GM12878 (cell line): ENCODE measurements at regions of chr12 and their contacts with region 1.

Region 1: GRCh38 chr12:76037130-76038103 is 5.8 kb upstream of the PHLDA1 start:
- DNase-seq: peak; percentile 34
- ATAC-seq: peak; percentile 68
- H3K4me3 ChIP-seq: no peak overlapping the region
- H3K27ac ChIP-seq: no peak overlapping the region
- H3K4me1 ChIP-seq: peaks cover 5% of the 10 kb centered on the region
- H3K27me3 ChIP-seq: no peaks in the 10 kb centered on the region
- CTCF ChIP-seq: peak; percentile 74 to 84 (median 81)
- EP300 ChIP-seq: no peak
- POLR2A ChIP-seq: no peak
- RAD21 ChIP-seq: peak; percentile 96

Region 2: DNA sequence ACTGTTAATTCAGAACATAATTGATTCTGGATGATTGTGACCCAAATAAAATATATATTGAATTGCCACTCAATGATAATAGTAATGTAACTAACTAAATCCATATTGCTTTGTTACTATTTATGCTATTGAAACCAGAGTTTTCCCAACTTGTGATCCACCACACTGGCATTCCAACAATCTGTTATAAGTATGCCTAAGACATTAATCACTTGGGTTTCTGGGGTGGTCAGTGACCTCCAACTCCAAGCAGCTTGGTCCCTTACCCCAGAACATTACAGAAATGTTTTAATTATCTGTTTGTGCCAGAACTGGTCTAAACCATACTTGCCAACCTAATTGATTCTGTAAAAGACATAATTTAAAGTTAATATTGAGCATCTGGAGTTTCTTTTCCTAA is 721.9 kb before region 1 on chr12:
- CTCF ChIA-PET with region 1: no interaction called
- POLR2A ChIA-PET with region 1: no interaction called
- RAD21 ChIA-PET with region 1: no interaction called
- SMC1A ChIA-PET with region 1: no interaction called
- in situ Hi-C with region 1: no loop called
- intact Hi-C with region 1: no loop called
- DNase-seq: no peak
- ATAC-seq: no peak
- H3K4me3 ChIP-seq: no peak overlapping the region
- H3K27ac ChIP-seq: no peak overlapping the region
- H3K4me1 ChIP-seq: no peaks in the 10 kb centered on the region
- H3K27me3 ChIP-seq: no peaks in the 10 kb centered on the region
- CTCF ChIP-seq: no peak
- EP300 ChIP-seq: no peak
- POLR2A ChIP-seq: no peak
- RAD21 ChIP-seq: no peak

Region 3: DNA sequence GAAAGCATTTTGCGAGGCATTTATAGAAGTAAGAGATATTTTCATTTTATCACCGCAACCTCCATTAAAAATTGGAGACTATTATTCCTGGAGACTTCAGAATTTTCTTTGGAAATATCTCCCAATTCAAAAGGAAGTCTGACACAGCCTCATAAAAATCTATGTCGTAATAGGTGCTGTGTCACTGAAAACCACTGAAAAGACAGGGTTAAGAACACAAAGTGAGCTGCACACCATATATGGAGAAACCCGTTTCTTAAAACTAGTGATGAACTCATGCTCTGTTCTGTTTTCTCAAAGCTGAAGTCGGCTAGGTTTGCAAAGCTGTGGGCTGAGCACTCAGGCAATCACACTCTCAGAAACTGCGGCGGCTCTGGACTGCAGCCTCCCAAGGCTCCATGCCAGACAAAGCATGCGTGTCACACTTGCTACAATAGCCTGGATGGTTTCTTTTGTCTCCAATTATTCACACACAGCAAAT is 556.9 kb before region 1 on chr12 and contains the start of gene GLIPR1:
- CTCF ChIA-PET with region 1: interaction called, 43 read pairs
- POLR2A ChIA-PET with region 1: interaction called, 9 read pairs
- RAD21 ChIA-PET with region 1: interaction called, 63 read pairs
- SMC1A ChIA-PET with region 1: interaction called, 50 read pairs
- in situ Hi-C with region 1: no loop called
- intact Hi-C with region 1: no loop called
- DNase-seq: peak; percentile 72
- ATAC-seq: peak; percentile 85
- H3K4me3 ChIP-seq: peak within 1 kb of the TSS; percentile 83
- H3K27ac ChIP-seq: peak within 1 kb of the TSS; percentile 88
- H3K4me1 ChIP-seq: peaks cover 28% of the 10 kb centered on the region
- H3K27me3 ChIP-seq: no peaks in the 10 kb centered on the region
- CTCF ChIP-seq: no peak
- EP300 ChIP-seq: no peak; a peak in 1 of 4 replicates
- POLR2A ChIP-seq: peak; percentile 91
- RAD21 ChIP-seq: no peak
- polyA plus RNA-seq, gene GLIPR1: 39.8 to 62.6 TPM

Region 4: DNA sequence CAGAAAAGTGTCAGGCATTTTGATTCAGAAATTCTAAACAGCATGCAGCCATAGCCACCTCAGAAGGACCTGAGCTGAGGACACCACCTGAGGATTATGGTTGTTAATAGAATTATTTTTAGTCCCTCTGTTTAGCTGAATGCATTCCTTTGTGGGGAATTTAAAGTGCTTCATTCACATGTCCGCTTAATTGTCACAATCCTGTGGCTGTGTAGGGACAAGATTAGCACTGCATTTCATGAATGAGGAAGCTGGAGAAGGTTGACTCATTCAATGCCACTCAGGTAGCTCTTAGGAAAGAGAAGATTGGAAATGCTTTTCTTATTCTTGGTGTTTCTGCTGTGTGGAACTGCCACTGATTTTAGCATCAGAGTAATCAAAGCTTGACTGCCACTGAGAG is 484.0 kb before region 1 on chr12:
- CTCF ChIA-PET with region 1: interaction called, 34 read pairs
- POLR2A ChIA-PET with region 1: no interaction called
- RAD21 ChIA-PET with region 1: interaction called, 89 read pairs
- SMC1A ChIA-PET with region 1: interaction called, 23 read pairs
- in situ Hi-C with region 1: no loop called
- intact Hi-C with region 1: no loop called
- DNase-seq: no peak
- ATAC-seq: peak; percentile 44
- H3K4me3 ChIP-seq: no peak overlapping the region
- H3K27ac ChIP-seq: no peak overlapping the region
- H3K4me1 ChIP-seq: no peaks in the 10 kb centered on the region
- H3K27me3 ChIP-seq: no peaks in the 10 kb centered on the region
- CTCF ChIP-seq: no peak
- EP300 ChIP-seq: no peak
- POLR2A ChIP-seq: no peak
- RAD21 ChIP-seq: no peak

Region 5: DNA sequence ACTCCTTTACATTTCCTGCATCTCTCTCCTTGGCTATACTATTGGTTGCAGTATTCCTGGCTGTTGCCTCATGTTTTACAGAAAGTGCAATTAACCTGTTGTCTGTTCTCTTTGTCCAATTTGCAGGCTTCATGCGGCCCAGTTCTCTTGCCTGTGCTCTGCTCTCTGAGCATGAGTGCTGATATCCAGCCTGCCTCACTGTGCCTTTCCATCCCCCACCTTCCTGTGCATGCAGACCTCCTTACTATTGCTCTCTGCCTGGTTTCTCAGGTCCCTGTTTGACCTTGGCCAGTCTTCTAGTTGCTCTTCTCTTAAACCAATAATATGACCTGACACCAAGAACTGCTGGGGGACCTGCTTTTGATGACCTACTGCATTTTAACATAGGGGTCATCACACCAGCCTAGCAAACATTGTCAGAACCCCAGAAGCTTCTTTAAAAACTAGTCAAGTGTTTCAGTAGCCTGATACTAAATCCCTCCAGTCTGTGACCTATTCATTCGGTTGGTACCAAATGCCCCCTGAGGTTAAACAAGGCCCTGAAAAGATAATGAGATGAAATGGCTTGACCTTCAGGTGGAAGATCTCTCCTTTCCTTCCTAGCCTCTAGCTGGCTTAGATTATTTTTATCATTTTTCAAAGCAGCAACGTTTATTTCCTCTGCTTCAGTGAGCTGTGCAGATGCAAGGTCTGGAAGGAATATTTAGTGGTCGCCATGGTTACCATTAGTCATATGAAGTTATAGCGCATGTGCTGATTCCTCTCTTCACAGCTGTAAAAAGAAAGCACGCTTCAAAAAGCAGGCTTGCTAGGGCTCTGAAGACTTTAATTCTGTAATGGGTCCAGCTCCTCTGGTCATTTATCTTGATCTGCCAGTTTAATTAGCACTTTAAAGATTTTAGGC is 222.3 kb before region 1 on chr12:
- CTCF ChIA-PET with region 1: interaction called, 43 read pairs
- POLR2A ChIA-PET with region 1: interaction called, 3 read pairs
- RAD21 ChIA-PET with region 1: interaction called, 61 read pairs
- SMC1A ChIA-PET with region 1: interaction called, 47 read pairs
- in situ Hi-C with region 1: no loop called
- intact Hi-C with region 1: no loop called
- DNase-seq: no peak
- ATAC-seq: peak; percentile 74
- H3K4me3 ChIP-seq: no peak overlapping the region
- H3K27ac ChIP-seq: no peak overlapping the region
- H3K4me1 ChIP-seq: peaks cover 4% of the 10 kb centered on the region; the same call in 1 of the 2 replicates
- H3K27me3 ChIP-seq: no peaks in the 10 kb centered on the region
- CTCF ChIP-seq: no peak
- EP300 ChIP-seq: no peak
- POLR2A ChIP-seq: no peak
- RAD21 ChIP-seq: no peak

Region 6: GRCh38 chr12:76348079-76348901 is 310.9 kb after region 1 on chr12 and contains the start of gene BBS10:
- CTCF ChIA-PET with region 1: interaction called, 13 read pairs
- POLR2A ChIA-PET with region 1: interaction called, 8 read pairs
- RAD21 ChIA-PET with region 1: interaction called, 21 read pairs
- SMC1A ChIA-PET with region 1: interaction called, 6 read pairs
- in situ Hi-C with region 1: no loop called
- intact Hi-C with region 1: loop called (anchors 5 kb)
- DNase-seq: peak; percentile 70
- ATAC-seq: peak; percentile 99
- H3K4me3 ChIP-seq: peak within 1 kb of the TSS; percentile 84
- H3K27ac ChIP-seq: peak within 1 kb of the TSS; percentile 83
- H3K4me1 ChIP-seq: peaks cover 7% of the 10 kb centered on the region; the same call in 1 of the 2 replicates
- H3K27me3 ChIP-seq: no peaks in the 10 kb centered on the region
- CTCF ChIP-seq: peak in 2 of 3 experiments; percentile 22 to 39; a peak in 3 of 6 replicates
- EP300 ChIP-seq: no peak
- POLR2A ChIP-seq: peak; percentile 93
- RAD21 ChIP-seq: 0 out of 2 replicates have a peak, but pooled peaks have one; percentile 7
- polyA plus RNA-seq, gene BBS10: 1.2 to 1.5 TPM